Calu3 (cell line): ENCODE measurements at regions of chr20 and their contacts with region 1.

Region 1: DNA sequence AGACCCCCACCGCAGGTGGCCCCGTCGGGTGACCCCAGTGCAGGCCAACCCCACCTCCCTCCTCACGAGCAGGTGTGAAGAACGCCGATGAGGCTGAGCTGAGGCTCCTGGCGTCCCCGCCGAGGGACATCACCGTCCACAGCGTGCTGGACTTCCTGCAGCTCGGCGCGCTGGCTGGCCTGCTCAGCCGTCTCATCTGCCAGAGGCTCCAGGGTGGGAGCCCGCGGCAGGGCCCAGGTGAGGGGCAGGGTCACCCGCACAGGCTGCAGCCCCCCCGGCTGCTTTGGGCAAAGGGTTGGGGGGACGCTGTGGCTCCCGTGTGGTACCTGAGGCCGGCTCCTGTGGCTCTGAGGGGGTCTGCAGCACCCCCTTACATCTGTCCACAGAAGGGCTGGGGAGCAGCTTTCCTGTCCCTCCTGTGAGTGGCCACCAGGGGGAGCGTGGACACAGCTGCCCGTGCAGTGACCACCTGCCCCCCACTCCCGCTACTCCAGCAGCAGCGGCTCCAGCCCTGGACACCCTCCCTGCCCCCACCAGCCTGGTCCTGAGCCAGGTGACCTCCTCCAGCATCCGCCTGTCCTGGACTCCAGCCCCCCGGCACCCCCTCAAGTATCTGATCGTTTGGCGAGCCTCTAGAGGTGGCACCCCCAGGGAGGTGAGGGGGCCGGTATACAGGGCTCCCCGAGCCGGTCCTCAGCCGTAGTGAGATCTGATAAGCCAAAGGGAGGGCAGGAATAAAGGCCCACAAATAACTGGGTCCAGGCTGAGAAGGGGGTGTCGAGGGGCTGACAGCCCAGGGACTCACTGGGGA is 16.5 kb downstream of the COL20A1 start:
- DNase-seq: peak; percentile 78
- H3K4me3 Mint-ChIP-seq: no peak overlapping the region
- H3K27ac Mint-ChIP-seq: no peak overlapping the region
- H3K4me1 Mint-ChIP-seq: no peaks in the 10 kb centered on the region
- H3K27me3 Mint-ChIP-seq: peaks cover 90% of the 10 kb centered on the region
- CTCF ChIP-seq: peak; percentile 98

Region 2: DNA sequence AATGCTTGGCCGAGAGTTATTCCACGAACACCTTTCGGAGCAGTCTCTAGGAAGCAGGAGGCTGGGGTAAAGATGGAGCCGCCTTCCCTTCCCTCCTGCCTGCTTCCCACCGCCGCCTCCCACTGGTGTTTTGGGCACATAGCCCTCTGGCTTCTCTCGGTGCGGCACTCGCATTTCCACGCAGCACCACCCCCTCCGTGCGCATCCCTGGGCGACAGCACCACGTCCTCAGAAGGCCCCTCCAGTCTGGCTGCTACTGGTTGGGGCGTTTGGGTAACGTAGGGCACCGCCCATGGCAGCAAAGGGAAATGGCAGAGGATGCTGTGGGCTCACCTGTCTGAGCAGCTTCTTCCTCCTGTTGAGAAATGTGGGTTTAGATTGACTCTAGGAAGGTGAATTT is 14.0 kb before region 1 on chr20:
- CTCF ChIA-PET with region 1: interaction called, 21 read pairs
- intact Hi-C with region 1: no loop called
- DNase-seq: no peak
- H3K4me3 Mint-ChIP-seq: no peak overlapping the region
- H3K27ac Mint-ChIP-seq: no peak overlapping the region
- H3K4me1 Mint-ChIP-seq: no peaks in the 10 kb centered on the region
- H3K27me3 Mint-ChIP-seq: peaks cover 88% of the 10 kb centered on the region
- CTCF ChIP-seq: no peak

Region 3: GRCh38 chr20:63381807-63382322 is 72.4 kb after region 1 on chr20:
- CTCF ChIA-PET with region 1: interaction called, 55 read pairs
- intact Hi-C with region 1: loop called (anchors 2 kb)
- DNase-seq: peak; percentile 65
- H3K4me3 Mint-ChIP-seq: no peak overlapping the region
- H3K27ac Mint-ChIP-seq: no peak overlapping the region
- H3K4me1 Mint-ChIP-seq: no peaks in the 10 kb centered on the region
- H3K27me3 Mint-ChIP-seq: peaks cover 88% of the 10 kb centered on the region
- CTCF ChIP-seq: peak; percentile 100

Region 4: DNA sequence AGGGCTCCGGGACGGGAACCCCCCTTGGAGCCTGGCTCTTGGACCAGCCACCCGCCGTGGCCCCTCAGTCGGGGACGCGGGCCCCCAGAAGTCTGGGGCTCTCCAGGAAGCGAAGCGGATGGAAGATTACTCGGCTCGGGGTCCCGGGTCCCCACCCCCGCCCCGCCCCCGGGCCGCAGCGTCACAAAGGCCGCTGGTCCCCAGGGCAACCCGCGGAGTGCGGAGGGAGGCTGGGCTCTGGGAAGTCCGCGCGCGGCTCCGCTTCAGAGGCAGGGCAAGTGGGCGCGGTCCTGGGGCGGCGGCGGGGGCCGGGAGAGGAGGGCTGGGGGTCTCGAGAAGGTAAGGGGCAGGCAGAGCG is 244.4 kb after region 1 on chr20 and contains the start of gene FNDC11:
- CTCF ChIA-PET with region 1: no interaction called
- intact Hi-C with region 1: no loop called
- DNase-seq: no peak
- H3K4me3 Mint-ChIP-seq: peak within 1 kb of the TSS; percentile 46
- H3K27ac Mint-ChIP-seq: peak within 1 kb of the TSS; percentile 44
- H3K4me1 Mint-ChIP-seq: no peaks in the 10 kb centered on the region
- H3K27me3 Mint-ChIP-seq: peaks cover 8% of the 10 kb centered on the region
- CTCF ChIP-seq: no peak
- total RNA-seq, gene FNDC11: 0.24 TPM in 1 of 2 replicates, not detected in the other